Aorta (tissue), 5 donors: ENCODE measurements at regions of chr2 and their contacts with region 1.

Region 1: DNA sequence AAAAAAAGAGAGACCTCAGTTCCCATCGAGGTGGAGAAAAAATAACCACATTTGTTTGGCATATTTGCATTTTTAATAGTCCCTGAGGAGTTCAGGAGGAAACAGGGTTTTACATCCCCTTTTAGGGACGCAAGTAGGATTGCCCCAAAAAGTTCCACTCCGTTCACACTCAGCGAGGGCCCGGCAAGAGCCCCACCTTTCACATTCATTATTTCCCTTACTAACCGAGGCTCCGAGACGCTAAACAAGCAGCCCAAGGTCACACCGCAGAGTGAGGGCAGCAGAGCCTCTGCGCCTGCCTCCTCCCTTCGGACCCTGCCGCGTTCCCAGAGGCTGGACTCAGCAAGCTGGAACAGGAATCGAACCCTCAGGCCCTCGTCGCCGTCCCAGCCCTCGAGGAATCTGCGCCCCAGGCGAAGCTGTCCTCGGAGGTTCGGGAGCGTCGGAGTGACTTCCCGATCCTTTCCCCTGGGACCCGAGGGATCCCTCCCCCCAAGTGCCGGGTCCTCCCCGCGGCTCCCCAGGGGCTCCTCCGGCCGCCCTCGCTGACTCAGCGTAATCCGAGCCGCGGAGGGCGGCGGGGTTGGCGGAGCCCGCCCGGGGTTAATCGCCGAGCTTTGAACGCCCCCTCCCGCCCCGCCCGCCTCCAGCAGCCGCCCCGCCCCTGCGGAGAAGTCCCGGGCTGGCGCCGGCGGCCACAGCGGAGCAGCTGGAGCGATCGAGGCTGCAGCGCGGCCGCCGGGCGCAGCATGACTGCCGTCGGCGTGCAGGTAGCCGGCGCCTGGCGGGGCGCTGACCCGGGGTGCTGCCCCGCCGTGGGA is at the start of gene TMEM37:
- DNase-seq: peak; percentile 82 to 91
- ATAC-seq: peak; percentile 79
- H3K4me3 ChIP-seq: peak within 1 kb of the TSS; percentile 50 to 54
- H3K27ac ChIP-seq: no peak within 1 kb of the TSS
- H3K4me1 ChIP-seq: no peaks in the 10 kb centered on the region
- H3K27me3 ChIP-seq: no peaks in the 10 kb centered on the region
- total RNA-seq, gene TMEM37: 5.2 to 11.0 TPM

Region 2: DNA sequence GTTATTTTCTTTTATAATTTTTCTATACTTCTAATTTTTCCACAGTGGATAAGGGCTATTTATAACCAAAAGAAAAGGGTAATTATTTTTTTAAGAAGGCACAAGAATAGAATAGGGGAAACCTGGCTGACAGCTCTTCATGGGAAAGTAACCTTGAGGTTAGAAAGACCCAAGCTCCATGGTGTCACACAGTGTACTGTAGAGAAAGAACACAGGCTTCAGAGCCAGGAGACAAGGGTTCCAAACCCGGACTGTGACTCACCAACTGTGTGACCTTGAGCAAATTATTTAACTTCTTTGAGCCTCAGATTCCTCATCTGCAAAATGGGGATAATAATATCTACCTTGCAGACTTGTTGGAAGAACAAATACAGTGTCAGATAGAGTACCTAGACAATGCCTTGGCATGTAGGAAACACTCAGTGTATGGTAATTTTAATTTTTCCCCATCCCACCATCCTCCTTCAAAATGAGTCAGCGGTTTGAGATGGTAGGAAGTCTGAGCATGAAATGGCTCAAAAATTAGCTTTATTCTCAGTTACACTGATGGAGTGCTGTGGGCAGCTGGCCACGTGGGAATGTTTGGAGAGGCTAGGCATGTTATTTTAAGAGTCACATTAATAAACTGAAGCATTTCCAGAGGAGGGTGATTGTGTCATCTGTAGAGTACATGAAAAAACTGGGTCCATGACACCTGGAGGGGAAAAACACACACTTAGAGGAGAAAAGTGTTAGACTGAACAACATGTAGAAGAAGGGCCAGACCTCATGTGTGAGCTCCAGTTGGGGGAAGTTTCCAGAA is 37.0 kb after region 1 on chr2:
- intact Hi-C with region 1: loop called in 1 of 2 experiments (anchors 2 kb)
- DNase-seq: peak in 1 of 2 donors; percentile 72
- ATAC-seq: peak; percentile 28
- H3K4me3 ChIP-seq: no peak overlapping the region
- H3K27ac ChIP-seq: peak overlapping the region in 1 of 2 donors; percentile 38
- H3K4me1 ChIP-seq: peaks cover 0 to 3% of the 10 kb centered on the region in 2 donors
- H3K27me3 ChIP-seq: no peaks in the 10 kb centered on the region